Right cardiac atrium (tissue), 5 donors: ENCODE measurements at regions of chr5 and their contacts with region 1.

Region 1: GRCh38 chr5:142324871-142325724 is at the start of gene SPRY4:
- DNase-seq: peak; percentile 96 to 98 (median 98)
- ATAC-seq: peak; percentile 82 to 85
- H3K4me3 ChIP-seq: peak within 1 kb of the TSS; percentile 58
- H3K27ac ChIP-seq: peak within 1 kb of the TSS; percentile 81
- H3K4me1 ChIP-seq: peaks cover 10% of the 10 kb centered on the region
- H3K27me3 ChIP-seq: no peaks in the 10 kb centered on the region
- total RNA-seq, gene SPRY4: 8.3 to 18.3 (median 11.7) TPM

Region 2: DNA sequence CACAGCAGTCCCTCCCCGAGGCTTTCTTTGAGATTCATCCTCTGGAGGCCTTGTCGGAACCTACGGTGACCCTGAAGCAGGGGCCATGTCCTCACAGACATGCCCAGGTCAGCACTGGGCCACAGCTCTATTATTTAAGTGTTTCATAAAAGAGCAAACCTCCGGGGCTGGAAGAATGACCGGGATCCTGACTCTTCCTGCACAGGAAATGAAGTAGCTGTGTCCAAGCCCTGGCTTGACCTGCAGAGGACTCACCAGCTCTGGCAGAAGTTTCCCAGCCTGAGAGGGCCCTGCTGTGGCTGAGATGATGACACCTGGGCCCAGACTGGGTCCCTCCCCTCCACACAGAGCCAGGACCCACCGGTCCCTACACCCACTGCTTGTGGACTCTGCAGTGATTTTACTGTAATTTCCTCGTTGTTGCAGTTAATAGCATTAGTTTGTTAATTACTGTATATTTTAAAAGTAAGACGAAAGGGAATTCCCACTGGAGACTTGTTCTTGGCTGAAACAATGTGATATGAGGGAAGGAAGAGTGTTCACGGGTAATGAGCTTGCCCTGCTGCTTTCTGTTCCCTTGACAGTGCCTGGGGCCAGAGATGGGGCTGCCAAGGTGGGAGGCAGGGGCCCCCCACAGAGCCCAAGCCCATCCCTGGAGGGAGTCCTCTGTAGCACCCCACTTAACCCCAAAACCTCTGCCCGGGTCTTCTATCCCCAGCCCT is 519.1 kb before region 1 on chr5:
- intact Hi-C with region 1: no loop called
- DNase-seq: peak; percentile 56 to 73 (median 64)
- ATAC-seq: peak; percentile 84 to 94
- H3K4me3 ChIP-seq: no peak overlapping the region
- H3K27ac ChIP-seq: peak overlapping the region; percentile 83
- H3K4me1 ChIP-seq: peaks cover 1% of the 10 kb centered on the region
- H3K27me3 ChIP-seq: no peaks in the 10 kb centered on the region

Region 3: DNA sequence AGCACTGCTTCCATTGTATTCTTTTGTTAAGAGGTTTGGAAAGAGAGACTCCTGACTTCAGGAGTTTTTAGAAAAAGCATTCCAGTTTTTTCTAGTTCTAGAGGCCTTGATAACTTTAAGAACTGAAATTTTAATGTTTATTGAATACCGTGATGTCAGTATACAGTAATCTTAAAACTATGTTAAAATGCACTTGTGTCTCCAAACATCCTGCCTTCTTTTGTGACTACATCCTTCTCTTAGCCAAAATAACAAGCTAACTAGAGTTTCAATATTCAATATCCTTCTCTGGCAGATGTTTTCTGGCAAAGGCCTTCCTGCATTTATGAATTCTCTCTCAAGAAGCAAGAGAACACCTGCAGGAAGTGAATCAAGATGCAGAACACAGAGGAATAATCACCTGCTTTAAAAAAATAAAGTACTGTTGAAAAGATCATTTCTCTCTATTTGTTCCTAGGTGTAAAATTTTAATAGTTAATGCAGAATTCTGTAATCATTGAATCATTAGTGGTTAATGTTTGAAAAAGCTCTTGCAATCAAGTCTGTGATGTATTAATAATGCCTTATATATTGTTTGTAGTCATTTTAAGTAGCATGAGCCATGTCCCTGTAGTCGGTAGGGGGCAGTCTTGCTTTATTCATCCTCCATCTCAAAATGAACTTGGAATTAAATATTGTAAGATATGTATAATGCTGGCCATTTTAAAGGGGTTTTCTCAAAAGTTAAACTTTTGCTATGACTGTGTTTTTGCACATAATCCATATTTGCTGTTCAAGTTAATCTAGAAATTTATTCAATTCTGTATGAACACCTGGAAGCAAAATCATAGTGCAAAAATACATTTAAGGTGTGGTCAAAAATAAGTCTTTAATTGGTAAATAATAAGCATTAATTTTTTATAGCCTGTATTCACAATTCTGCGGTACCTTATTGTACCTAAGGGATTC is 173.4 kb before region 1 on chr5:
- intact Hi-C with region 1: loop called in 2 of 4 experiments (anchors 5 to 10 kb)
- DNase-seq: peak in 1 of 3 donors; percentile 71
- ATAC-seq: peak; percentile 65 to 74
- H3K4me3 ChIP-seq: no peak overlapping the region
- H3K27ac ChIP-seq: no peak overlapping the region
- H3K4me1 ChIP-seq: no peaks in the 10 kb centered on the region
- H3K27me3 ChIP-seq: no peaks in the 10 kb centered on the region

Region 4: DNA sequence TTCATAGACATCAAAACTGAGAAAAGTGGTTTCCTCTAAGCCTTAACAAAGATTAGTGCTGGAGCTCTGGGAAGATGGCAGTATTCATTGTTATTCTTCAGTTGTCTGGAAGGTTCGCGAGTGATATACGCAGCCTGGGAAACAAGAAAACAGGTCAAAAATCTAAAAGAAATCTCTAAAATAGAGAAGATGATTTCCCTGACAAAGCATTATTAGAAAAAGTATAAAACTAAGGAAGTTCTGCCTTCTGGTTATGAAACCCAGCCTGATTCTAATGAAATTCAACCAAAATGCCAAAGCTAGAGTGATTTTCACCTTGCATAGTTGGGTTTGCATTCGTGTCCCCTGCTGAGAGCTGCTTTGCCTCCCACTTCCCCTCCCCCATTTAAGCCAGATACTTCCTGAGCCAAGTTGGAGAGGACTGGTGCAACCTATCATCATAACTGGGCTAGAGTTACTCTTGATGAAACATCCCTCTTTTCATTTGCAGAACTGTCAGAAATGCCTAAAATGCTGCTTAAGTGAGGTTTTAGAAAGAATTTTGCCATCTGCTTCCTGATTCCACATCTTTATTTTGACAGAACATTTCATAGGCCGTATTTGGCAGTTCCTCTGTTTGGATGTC is 168.1 kb before region 1 on chr5:
- intact Hi-C with region 1: loop called in 2 of 4 experiments (anchors 5 to 10 kb)
- DNase-seq: no peak
- ATAC-seq: peak in 1 of 2 donors; percentile 48
- H3K4me3 ChIP-seq: no peak overlapping the region
- H3K27ac ChIP-seq: no peak overlapping the region
- H3K4me1 ChIP-seq: no peaks in the 10 kb centered on the region
- H3K27me3 ChIP-seq: no peaks in the 10 kb centered on the region

Region 5: GRCh38 chr5:142356716-142357473 is 31.8 kb after region 1 on chr5:
- intact Hi-C with region 1: loop called in 1 of 4 experiments (anchors 5 kb)
- DNase-seq: peak; percentile 91 to 95 (median 95)
- ATAC-seq: peak; percentile 93 to 96
- H3K4me3 ChIP-seq: peak overlapping the region; percentile 73
- H3K27ac ChIP-seq: peak overlapping the region; percentile 96
- H3K4me1 ChIP-seq: no peaks in the 10 kb centered on the region
- H3K27me3 ChIP-seq: no peaks in the 10 kb centered on the region

Region 6: DNA sequence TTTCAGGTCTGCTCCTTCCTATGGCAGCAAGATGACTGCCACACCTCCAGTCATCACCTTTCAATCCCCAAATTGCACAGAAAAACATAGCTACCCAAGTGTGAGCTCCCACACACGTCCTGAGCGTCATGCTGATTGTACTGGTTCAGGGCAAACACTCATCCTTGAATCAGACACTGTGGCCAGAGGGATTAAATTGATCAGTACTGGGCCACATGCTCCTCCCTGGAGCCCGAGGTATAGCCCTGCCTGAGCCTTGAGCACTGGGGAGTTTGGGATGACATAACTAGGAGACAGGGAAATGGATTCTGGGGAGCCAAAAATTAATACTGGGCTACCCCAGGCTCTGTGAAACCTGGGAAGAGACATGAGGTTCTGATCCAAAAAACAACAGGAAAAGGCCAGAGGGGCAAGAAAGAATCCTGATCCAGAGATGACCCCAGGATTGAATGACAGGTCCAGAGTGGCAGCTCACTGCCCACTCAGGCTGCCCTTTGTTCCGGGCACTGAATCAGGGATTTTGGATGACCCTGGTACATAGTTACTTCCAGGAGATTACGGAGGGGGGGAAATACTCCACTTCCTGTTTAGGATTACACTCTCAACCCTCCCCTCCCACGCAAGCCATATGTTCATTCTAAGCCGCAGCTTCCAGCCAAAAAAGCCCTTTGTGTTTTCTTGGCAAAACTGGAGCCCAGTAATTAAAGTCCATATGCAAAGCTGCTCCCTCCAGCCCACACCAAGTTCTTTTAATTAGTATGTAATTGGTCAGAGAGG is 141.3 kb after region 1 on chr5:
- intact Hi-C with region 1: no loop called
- DNase-seq: no peak
- ATAC-seq: no peak
- H3K4me3 ChIP-seq: no peak overlapping the region
- H3K27ac ChIP-seq: no peak overlapping the region
- H3K4me1 ChIP-seq: peaks cover 4% of the 10 kb centered on the region
- H3K27me3 ChIP-seq: no peaks in the 10 kb centered on the region

Region 7: DNA sequence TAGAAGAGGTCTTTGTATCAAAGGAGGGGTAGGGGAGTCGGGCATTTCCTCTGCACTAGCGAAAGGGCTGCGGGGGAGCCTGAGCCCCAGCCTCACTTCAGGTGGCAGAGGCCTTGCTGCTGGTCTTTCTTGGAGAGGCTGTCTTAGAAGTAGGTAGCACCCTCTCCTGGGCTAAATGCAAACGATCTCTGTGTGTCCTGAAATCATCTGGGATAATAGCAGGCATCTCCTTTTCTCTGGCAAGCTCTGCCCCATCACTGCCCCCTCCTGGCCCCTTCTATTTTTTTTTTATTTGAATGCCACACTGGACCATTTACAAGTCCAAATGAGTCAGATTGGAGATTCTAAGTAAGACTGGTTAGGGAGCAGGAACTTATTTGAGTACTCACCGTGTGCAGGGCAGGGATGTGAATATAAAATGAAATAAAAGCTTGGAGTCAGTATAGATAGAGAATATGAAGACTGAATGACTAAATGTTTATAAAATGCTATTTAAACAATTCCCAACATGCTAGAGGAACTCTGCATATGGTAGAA is 223.7 kb after region 1 on chr5:
- intact Hi-C with region 1: loop called in 1 of 4 experiments (anchors 10 kb)
- DNase-seq: peak in 2 of 3 donors; percentile 37 to 66
- ATAC-seq: peak; percentile 87 to 89
- H3K4me3 ChIP-seq: no peak overlapping the region
- H3K27ac ChIP-seq: no peak overlapping the region
- H3K4me1 ChIP-seq: peaks cover 3% of the 10 kb centered on the region
- H3K27me3 ChIP-seq: no peaks in the 10 kb centered on the region